ENCODE measurements at regions of chr11 and their contacts with region 1.

Region 1: GRCh38 chr11:125429166-125429707 is 66.8 kb downstream of the FEZ1 start:
- DNase-seq: peak; percentile 35
- H3K4me3 ChIP-seq: no peak overlapping the region
- H3K27ac ChIP-seq: no peak overlapping the region
- H3K4me1 ChIP-seq: peaks cover 20% of the 10 kb centered on the region
- H3K27me3 ChIP-seq: no peaks in the 10 kb centered on the region
- CTCF ChIP-seq: peak; percentile 88 to 92

Region 2: DNA sequence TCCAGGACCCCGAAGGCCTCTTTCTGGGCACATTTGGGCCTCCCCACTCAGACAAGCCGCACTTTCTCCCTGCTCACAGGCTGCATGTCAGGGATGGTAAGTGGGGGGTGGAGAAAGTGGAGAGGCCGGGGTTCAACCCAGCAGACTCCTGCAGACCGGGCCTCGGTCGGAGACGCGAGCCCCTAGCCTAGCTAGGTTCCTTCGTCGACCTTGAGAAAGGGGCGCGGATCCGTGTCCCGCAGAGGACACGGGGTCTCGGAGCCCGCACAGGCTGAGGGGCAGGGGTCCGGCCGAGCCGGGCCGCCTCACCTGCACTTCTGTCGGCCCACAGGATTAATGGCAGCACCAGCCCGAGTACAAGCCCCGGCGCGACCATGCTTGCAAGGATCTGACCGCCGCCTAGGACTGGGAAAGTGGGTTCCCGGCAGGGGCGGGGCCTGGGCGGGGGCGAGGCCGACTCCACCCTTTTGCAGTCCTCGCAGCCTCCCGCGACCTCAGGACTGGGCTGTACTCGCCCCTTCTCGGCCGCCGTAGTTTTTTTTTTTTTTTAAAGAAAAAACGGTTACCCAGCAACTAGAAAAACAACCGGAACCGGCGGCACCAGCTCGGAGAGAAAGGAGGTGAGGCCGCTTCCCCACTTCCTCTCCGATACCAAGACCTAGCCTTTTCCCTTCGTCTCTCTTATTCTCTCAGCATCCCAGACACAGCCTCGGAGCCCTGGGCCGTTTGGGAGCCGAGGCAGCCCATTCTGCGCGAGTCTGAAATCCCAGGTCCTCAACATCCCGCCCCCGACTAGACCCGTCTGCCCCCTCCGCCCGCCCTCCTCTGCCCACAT is 755.7 kb before region 1 on chr11 and contains the starts of genes SIAE and SPA17:
- CTCF ChIA-PET with region 1: interaction called, 10 read pairs
- dilution Hi-C with region 1: no loop called
- in situ Hi-C with region 1: no loop called
- intact Hi-C with region 1: no loop called
- DNase-seq: peak; percentile 95
- H3K4me3 ChIP-seq: peak within 1 kb of the TSS; percentile 67 to 71 (median 70)
- H3K27ac ChIP-seq: peak within 1 kb of the TSS; percentile 78
- H3K4me1 ChIP-seq: peaks cover 14% of the 10 kb centered on the region
- H3K27me3 ChIP-seq: no peaks in the 10 kb centered on the region
- CTCF ChIP-seq: no peak
- total RNA-seq, gene SIAE: 13.7 to 13.8 TPM
- total RNA-seq, gene SPA17: 6.2 to 8.9 TPM

Region 3: DNA sequence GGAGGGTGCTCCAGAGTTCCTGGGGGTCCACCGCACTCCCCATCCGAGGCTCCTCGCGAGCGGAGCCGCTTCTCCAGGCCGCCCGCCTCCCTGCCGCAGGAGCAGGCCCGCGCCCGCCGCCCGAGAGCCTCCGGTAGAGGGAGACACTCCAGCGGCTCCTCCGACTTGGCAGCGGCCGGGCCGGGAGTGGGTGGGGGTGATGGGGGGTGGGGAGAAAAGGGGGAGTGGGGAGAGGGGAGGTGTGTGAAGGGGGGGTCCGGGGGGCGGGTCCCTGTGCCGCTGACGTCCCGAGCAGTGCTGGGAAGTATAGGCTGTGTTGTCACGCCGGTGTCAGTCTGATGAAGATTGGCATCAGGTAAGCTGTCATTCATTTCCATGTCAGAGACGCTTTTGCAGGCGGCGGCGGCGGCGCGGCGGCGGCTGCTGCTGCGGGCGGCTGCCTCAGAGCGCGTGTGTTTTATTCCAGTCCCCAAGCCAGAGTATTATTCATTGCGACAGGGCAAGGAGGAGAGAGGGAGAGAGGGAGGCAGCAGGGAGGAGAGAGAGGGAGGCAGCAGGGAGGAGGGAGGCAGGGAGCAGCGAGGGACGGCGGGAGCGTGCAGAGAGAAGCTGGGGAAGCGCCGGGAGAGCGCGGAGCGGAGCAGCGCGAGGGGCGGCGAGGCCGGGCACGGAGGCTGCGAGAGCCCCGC is 264.7 kb before region 1 on chr11 and contains the start of gene PKNOX2:
- CTCF ChIA-PET with region 1: no interaction called
- dilution Hi-C with region 1: no loop called
- in situ Hi-C with region 1: loop called in 1 of 2 experiments (anchors 25 kb)
- intact Hi-C with region 1: loop called (anchors 2 kb)
- DNase-seq: peak; percentile 47
- H3K4me3 ChIP-seq: peak within 1 kb of the TSS; percentile 56 to 69 (median 59)
- H3K27ac ChIP-seq: no peak within 1 kb of the TSS
- H3K4me1 ChIP-seq: peaks cover 12% of the 10 kb centered on the region
- H3K27me3 ChIP-seq: peaks cover 11% of the 10 kb centered on the region
- CTCF ChIP-seq: peak; percentile 28 to 70
- total RNA-seq, gene PKNOX2: 0.16 to 0.33 TPM

Region 4: GRCh38 chr11:125404776-125405435 is 24.3 kb before region 1 on chr11:
- CTCF ChIA-PET with region 1: interaction called, 5 read pairs
- dilution Hi-C with region 1: no loop called
- in situ Hi-C with region 1: no loop called
- intact Hi-C with region 1: loop called (anchors 2 kb)
- DNase-seq: peak; percentile 27
- H3K4me3 ChIP-seq: no peak overlapping the region
- H3K27ac ChIP-seq: no peak overlapping the region
- H3K4me1 ChIP-seq: peaks cover 11% of the 10 kb centered on the region
- H3K27me3 ChIP-seq: no peaks in the 10 kb centered on the region
- CTCF ChIP-seq: peak; percentile 81 to 96

Region 5: GRCh38 chr11:125874556-125875124 is 445.4 kb after region 1 on chr11:
- CTCF ChIA-PET with region 1: no interaction called
- dilution Hi-C with region 1: no loop called
- in situ Hi-C with region 1: no loop called
- intact Hi-C with region 1: loop called (anchors 1 kb)
- DNase-seq: peak; percentile 44
- H3K4me3 ChIP-seq: no peak overlapping the region
- H3K27ac ChIP-seq: no peak overlapping the region
- H3K4me1 ChIP-seq: no peaks in the 10 kb centered on the region
- H3K27me3 ChIP-seq: no peaks in the 10 kb centered on the region
- CTCF ChIP-seq: peak; percentile 83 to 85